Activated T-helper 2 cell treated with anti-CD3 and anti-CD28 coated beads, Interferon-gamma antibody, Interleukin-2, Interleukin-4, amounts not matched to agents 10 μg/mL and 5 μg/mL and 100 μg/mL, durations not matched to agents 14 hours and 24 hours and 36 hours (primary cell): ENCODE measurements at regions of chr3 and their contacts with region 1.

Region 1: DNA sequence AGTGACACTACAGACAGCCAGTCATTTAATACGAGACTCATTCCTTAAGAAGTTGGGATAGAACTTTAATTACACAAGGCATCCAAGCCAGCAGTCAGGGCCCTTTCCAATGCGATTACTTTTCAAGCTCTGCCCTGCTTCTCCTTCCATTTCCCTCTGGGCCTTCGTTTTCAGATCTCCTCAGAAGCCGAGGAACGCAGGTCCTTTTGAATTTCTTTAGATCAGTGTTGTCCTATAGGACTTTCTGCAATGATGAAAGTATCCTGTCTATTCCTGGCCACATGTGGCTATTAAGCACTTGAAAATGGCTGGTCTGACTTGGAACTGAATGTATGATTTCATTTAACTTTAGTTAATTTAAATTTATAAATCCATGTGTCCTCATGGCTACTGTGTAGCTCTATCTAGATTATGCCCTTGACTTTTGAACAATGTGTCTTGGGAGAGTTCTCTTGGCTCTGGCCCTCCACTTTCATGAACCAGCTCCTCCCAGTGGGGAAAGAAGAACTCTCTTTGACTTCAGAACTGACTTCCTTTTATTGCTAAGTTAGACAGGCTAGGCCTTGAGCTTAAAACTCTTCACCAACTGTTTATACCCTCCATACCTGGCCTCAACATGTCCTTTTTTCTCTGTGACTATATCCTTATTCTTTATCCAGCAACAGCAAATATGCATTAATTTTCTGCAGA is 22.6 kb downstream of the TGFBR2 start:
- DNase-seq: no peak
- H3K4me3 Mint-ChIP-seq: peak overlapping the region; percentile 26
- H3K27ac Mint-ChIP-seq: peak overlapping the region; percentile 99
- H3K4me1 Mint-ChIP-seq: peaks cover 77% of the 10 kb centered on the region
- H3K27me3 Mint-ChIP-seq: no peaks in the 10 kb centered on the region

Region 2: DNA sequence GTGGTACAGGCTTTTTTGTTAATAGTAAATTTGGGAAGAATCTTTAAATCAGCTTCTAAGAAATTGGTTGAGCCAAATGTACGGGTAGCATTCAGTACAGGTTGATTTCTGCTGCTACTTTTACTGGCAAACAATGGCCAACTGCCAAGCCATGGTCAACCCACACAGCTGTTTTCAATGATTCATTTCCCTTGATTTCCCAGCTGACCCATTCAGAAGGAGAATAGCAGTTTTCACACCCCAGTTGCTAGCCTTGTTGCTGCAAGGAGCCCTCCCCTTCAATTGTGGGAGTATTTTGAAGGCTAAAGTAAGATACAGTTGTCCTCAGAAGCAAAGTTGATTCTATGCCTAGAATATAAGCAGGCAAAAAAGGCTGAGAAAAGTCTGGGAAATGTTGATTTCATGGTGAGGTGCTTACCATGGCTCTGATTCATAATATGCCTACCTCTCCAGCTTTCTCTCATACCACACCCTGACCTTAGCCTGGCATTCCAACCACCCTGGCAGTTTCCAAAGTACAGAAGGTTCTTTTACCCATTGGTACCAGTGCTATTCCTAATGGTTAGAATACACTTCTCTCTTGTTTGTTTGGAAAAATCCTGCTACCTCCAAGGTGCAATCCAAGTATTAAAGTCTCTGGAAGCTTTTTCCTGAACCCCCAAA is 342.9 kb before region 1 on chr3:
- intact Hi-C with region 1: loop called (anchors 5 kb)
- DNase-seq: no peak
- H3K4me3 Mint-ChIP-seq: no peak overlapping the region
- H3K27ac Mint-ChIP-seq: no peak overlapping the region
- H3K4me1 Mint-ChIP-seq: peaks cover 18% of the 10 kb centered on the region
- H3K27me3 Mint-ChIP-seq: no peaks in the 10 kb centered on the region

Region 3: DNA sequence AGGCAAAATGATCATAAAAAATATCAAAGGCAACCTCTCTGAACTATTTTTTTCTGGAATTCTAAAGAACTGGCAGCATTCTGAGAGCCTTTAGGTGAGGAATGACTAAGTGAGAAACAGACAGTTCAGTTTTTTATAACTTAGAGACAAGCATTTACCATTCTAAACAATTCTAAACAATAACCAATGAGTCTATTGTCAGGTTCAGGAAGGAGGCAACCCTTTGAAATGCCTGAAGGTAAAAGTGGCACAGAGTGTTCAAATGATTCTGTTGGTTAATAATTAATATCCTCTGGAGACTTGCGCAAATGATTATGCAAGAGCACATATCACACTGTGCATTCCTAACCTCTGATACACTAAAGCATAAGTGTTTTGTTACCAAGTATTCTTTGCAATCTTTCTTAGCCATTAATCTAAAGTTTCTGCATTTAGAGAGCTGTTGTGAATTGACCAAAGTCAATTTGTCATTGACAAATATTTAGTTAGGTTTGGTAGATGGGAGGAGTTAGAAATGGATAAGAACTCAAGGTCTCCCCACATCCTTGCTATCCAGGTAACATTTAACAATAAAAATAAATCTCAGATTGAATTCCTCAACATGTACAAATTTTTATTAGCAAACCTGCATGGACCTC is 31.8 kb before region 1 on chr3:
- intact Hi-C with region 1: no loop called
- DNase-seq: no peak
- H3K4me3 Mint-ChIP-seq: no peak overlapping the region
- H3K27ac Mint-ChIP-seq: no peak overlapping the region
- H3K4me1 Mint-ChIP-seq: peaks cover 29% of the 10 kb centered on the region
- H3K27me3 Mint-ChIP-seq: no peaks in the 10 kb centered on the region

Region 4: DNA sequence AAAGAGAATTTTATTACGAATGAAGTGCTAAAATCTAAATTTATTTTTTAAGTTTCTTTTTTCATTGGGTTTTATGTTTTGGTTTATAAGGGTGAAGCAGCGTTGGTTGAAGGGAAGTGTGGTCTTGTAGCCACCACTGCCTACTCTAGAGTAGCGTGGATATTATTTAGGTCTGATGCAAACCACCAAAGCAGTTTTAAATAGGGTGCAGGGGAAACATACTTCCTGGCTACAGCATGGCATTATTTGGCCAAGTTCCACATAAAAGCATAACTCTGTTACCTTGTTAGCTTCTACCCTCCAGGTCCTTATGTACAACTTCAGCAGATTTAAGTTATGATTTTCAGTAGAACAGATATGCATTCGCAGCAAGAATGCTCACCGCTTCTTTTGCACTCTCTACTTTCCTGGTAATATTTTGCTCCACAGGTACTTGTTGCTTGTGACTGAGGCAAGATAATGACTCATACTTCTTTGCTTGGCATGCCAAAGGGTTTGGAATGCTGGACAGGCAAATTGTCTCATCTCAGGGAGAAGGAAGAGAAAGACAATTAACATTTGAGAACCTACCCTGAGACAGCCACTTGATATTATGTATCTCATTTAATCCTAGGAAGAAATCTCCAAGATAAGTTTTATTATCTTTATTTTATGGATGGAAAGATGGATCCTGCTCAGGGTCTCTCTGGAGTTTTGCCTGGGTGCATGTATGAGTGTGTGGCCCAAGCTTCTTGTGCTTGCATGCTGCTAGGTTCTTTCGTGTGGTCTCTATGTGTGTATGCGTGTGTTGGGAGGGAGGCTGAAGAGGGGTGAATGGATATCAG is 17.2 kb before region 1 on chr3:
- intact Hi-C with region 1: loop called (anchors 1 kb)
- DNase-seq: no peak
- H3K4me3 Mint-ChIP-seq: peak overlapping the region; percentile 68
- H3K27ac Mint-ChIP-seq: peak overlapping the region; percentile 77
- H3K4me1 Mint-ChIP-seq: peaks cover 75% of the 10 kb centered on the region
- H3K27me3 Mint-ChIP-seq: no peaks in the 10 kb centered on the region

Region 5: GRCh38 chr3:30644593-30645012 is 15.6 kb after region 1 on chr3:
- intact Hi-C with region 1: loop called (anchors 1 kb)
- DNase-seq: no peak
- H3K4me3 Mint-ChIP-seq: peak overlapping the region; percentile 64
- H3K27ac Mint-ChIP-seq: peak overlapping the region; percentile 95
- H3K4me1 Mint-ChIP-seq: peaks cover 88% of the 10 kb centered on the region
- H3K27me3 Mint-ChIP-seq: no peaks in the 10 kb centered on the region